ENCODE measurements at regions of chr19 and their contacts with region 1.

Region 1: GRCh38 chr19:7943444-7944176 is at the start of gene TIMM44:
- DNase-seq: peak; percentile 95 to 99 (median 98)
- ATAC-seq: peak; percentile 97
- H3K4me3 ChIP-seq: peak within 1 kb of the TSS; percentile 77 to 96
- H3K4me3 Mint-ChIP-seq: peak within 1 kb of the TSS; percentile 91
- H3K27ac ChIP-seq: peak within 1 kb of the TSS; percentile 96 to 97
- H3K27ac Mint-ChIP-seq: peak within 1 kb of the TSS; percentile 96
- H3K4me1 ChIP-seq: peaks cover 17% of the 10 kb centered on the region
- H3K4me1 Mint-ChIP-seq: peaks cover 35% of the 10 kb centered on the region
- H3K27me3 ChIP-seq: no peaks in the 10 kb centered on the region
- H3K27me3 Mint-ChIP-seq: no peaks in the 10 kb centered on the region
- CTCF ChIP-seq: no peak
- total RNA-seq, gene TIMM44: 97.7 to 101 TPM

Region 2: GRCh38 chr19:7636691-7637373 is 306.8 kb before region 1 on chr19 and contains the start of gene STXBP2:
- CTCF ChIA-PET with region 1: no interaction called
- POLR2A ChIA-PET with region 1: no interaction called
- intact Hi-C with region 1: loop called in 1 of 2 experiments (anchors 5 kb)
- DNase-seq: peak; percentile 89 to 99 (median 94)
- ATAC-seq: peak; percentile 99
- H3K4me3 ChIP-seq: peak within 1 kb of the TSS; percentile 36 to 93
- H3K4me3 Mint-ChIP-seq: peak within 1 kb of the TSS; percentile 85
- H3K27ac ChIP-seq: peak within 1 kb of the TSS; percentile 70 to 97
- H3K27ac Mint-ChIP-seq: peak within 1 kb of the TSS; percentile 91
- H3K4me1 ChIP-seq: peaks cover 24% of the 10 kb centered on the region
- H3K4me1 Mint-ChIP-seq: peaks cover 41% of the 10 kb centered on the region
- H3K27me3 ChIP-seq: no peaks in the 10 kb centered on the region
- H3K27me3 Mint-ChIP-seq: no peaks in the 10 kb centered on the region
- CTCF ChIP-seq: peak; percentile 34
- total RNA-seq, gene STXBP2: 260 to 270 TPM

Region 3: GRCh38 chr19:7799640-7800355 is 143.8 kb before region 1 on chr19:
- CTCF ChIA-PET with region 1: no interaction called
- POLR2A ChIA-PET with region 1: no interaction called
- intact Hi-C with region 1: no loop called
- DNase-seq: peak in 8 of 9 experiments; percentile 15 to 77 (median 66)
- ATAC-seq: no peak
- H3K4me3 ChIP-seq: no peak overlapping the region
- H3K4me3 Mint-ChIP-seq: no peak overlapping the region
- H3K27ac ChIP-seq: no peak overlapping the region
- H3K27ac Mint-ChIP-seq: no peak overlapping the region
- H3K4me1 ChIP-seq: no peaks in the 10 kb centered on the region
- H3K4me1 Mint-ChIP-seq: peaks cover 4% of the 10 kb centered on the region
- H3K27me3 ChIP-seq: peaks cover 0 to 4% of the 10 kb centered on the region in 2 experiments
- H3K27me3 Mint-ChIP-seq: peaks cover 11% of the 10 kb centered on the region
- CTCF ChIP-seq: peak; percentile 69

Region 4: DNA sequence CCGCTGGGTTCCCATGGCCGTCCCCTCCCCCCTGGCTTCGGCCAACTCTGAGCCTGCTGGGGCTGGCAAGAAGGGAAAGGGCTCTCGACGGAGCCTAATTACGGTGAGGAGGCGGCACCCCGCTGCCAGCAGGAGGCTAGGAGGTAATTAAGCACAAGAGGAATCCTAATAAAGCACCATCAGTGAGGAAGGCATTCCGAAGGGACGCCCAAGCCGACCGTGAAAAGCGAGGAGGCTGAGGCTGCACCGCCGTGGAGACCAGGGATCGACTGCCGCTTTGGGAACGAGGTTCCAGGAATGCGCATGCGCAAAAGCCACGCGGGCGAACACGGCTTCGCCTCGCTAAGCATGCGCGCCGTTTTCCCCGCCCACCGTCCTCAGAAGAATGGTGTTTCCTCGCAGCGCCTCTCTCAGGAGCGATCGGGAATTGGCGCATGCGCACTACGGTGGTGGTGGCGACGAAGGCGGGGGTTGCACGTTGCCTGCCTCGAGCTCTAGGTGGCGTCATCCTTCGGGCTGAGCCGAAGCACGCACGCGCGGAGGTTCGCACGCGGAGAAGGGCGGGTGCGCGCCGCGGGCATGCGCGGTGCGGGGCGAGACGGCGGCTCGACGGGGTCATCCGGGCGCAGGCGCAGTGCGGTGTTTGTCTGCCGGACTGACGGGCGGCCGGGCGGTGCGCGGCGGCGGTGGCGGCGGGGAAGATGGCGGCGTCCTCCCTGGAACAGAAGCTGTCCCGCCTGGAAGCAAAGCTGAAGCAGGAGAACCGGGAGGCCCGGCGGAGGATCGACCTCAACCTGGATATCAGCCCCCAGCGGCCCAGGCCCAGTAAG is 40.2 kb before region 1 on chr19 and contains the start of gene MAP2K7:
- CTCF ChIA-PET with region 1: interaction called, 8 read pairs
- POLR2A ChIA-PET with region 1: interaction called, 12 read pairs
- intact Hi-C with region 1: loop called (anchors 1 kb)
- DNase-seq: peak; percentile 99 to 100 (median 100)
- ATAC-seq: peak; percentile 81
- H3K4me3 ChIP-seq: peak within 1 kb of the TSS; percentile 59 to 87
- H3K4me3 Mint-ChIP-seq: peak within 1 kb of the TSS; percentile 91
- H3K27ac ChIP-seq: peak within 1 kb of the TSS; percentile 65 to 84
- H3K27ac Mint-ChIP-seq: peak within 1 kb of the TSS; percentile 96
- H3K4me1 ChIP-seq: peaks cover 30% of the 10 kb centered on the region
- H3K4me1 Mint-ChIP-seq: peaks cover 23% of the 10 kb centered on the region
- H3K27me3 ChIP-seq: no peaks in the 10 kb centered on the region
- H3K27me3 Mint-ChIP-seq: no peaks in the 10 kb centered on the region
- CTCF ChIP-seq: peak; percentile 59
- total RNA-seq, gene MAP2K7: 127 to 135 TPM

Region 5: DNA sequence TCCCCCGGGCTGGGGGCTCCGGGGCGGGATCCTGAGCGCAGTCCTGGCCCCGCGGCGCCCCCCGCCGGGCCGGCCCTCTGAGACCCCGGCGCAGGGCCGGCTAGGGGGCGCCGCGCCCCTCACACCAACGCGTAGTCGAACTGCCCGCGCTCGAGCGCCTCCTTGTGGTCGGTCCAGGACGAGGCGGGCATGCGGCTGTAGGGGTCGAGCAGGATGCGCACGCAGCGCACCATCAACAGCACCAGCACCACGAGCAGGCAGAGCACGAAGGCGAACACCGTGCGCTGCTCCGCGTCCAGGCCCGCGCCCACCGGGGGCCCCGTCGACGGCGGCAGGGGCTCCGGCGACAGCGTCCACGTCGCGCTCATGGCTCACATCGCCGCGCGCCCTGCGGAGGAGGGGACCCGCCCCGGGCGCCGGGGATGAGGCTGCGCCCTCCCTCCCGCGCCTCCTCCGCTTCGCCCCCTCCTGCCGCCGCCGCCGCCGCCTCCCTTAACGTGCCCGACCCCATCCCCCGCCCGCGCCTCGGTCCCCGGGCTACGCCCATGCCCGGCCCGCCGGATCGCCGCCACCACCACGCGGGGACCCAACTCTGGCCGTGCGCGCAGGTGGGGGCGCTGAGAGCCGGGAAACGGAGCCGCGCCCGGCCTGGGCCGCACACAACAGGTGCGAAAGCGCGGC is 18.3 kb before region 1 on chr19:
- CTCF ChIA-PET with region 1: interaction called, 34 read pairs
- POLR2A ChIA-PET with region 1: interaction called, 14 read pairs
- intact Hi-C with region 1: loop called (anchors 1 kb)
- DNase-seq: peak; percentile 60 to 90 (median 84)
- ATAC-seq: peak; percentile 21
- H3K4me3 ChIP-seq: no peak overlapping the region
- H3K4me3 Mint-ChIP-seq: peak overlapping the region; percentile 77
- H3K27ac ChIP-seq: no peak overlapping the region
- H3K27ac Mint-ChIP-seq: peak overlapping the region; percentile 45
- H3K4me1 ChIP-seq: peaks cover 24% of the 10 kb centered on the region
- H3K4me1 Mint-ChIP-seq: peaks cover 32% of the 10 kb centered on the region
- H3K27me3 ChIP-seq: no peaks in the 10 kb centered on the region
- H3K27me3 Mint-ChIP-seq: no peaks in the 10 kb centered on the region
- CTCF ChIP-seq: peak; percentile 73

Region 6: GRCh38 chr19:7970716-7971448 is 27.3 kb after region 1 on chr19:
- CTCF ChIA-PET with region 1: interaction called, 25 read pairs
- POLR2A ChIA-PET with region 1: interaction called, 3 read pairs
- intact Hi-C with region 1: no loop called
- DNase-seq: peak in 4 of 9 experiments; percentile 14 to 46 (median 25)
- ATAC-seq: no peak
- H3K4me3 ChIP-seq: no peak overlapping the region
- H3K4me3 Mint-ChIP-seq: no peak overlapping the region
- H3K27ac ChIP-seq: no peak overlapping the region
- H3K27ac Mint-ChIP-seq: no peak overlapping the region
- H3K4me1 ChIP-seq: no peaks in the 10 kb centered on the region
- H3K4me1 Mint-ChIP-seq: no peaks in the 10 kb centered on the region
- H3K27me3 ChIP-seq: no peaks in the 10 kb centered on the region
- H3K27me3 Mint-ChIP-seq: no peaks in the 10 kb centered on the region
- CTCF ChIP-seq: peak; percentile 58

Region 7: GRCh38 chr19:8208922-8209461 is 265.4 kb after region 1 on chr19 and contains the start of gene CERS4:
- CTCF ChIA-PET with region 1: no interaction called
- POLR2A ChIA-PET with region 1: no interaction called
- intact Hi-C with region 1: loop called in 1 of 2 experiments (anchors 1 kb)
- DNase-seq: peak; percentile 43 to 87 (median 75)
- ATAC-seq: peak; percentile 85
- H3K4me3 ChIP-seq: peak within 1 kb of the TSS; percentile 75 to 86
- H3K4me3 Mint-ChIP-seq: peak within 1 kb of the TSS; percentile 85
- H3K27ac ChIP-seq: peak within 1 kb of the TSS; percentile 51 to 72
- H3K27ac Mint-ChIP-seq: peak within 1 kb of the TSS; percentile 87
- H3K4me1 ChIP-seq: peaks cover 22% of the 10 kb centered on the region
- H3K4me1 Mint-ChIP-seq: peaks cover 26% of the 10 kb centered on the region
- H3K27me3 ChIP-seq: no peaks in the 10 kb centered on the region
- H3K27me3 Mint-ChIP-seq: no peaks in the 10 kb centered on the region
- CTCF ChIP-seq: no peak
- total RNA-seq, gene CERS4: 6.9 to 7.2 TPM

Region 8: GRCh38 chr19:8321060-8321985 is 377.7 kb after region 1 on chr19 and contains the starts of genes NDUFA7 and RPS28:
- CTCF ChIA-PET with region 1: no interaction called
- POLR2A ChIA-PET with region 1: no interaction called
- intact Hi-C with region 1: loop called in 1 of 2 experiments (anchors 1 kb)
- DNase-seq: peak; percentile 94 to 99 (median 97)
- ATAC-seq: peak; percentile 93
- H3K4me3 ChIP-seq: peak within 1 kb of the TSS; percentile 81 to 98
- H3K4me3 Mint-ChIP-seq: peak within 1 kb of the TSS; percentile 96
- H3K27ac ChIP-seq: peak within 1 kb of the TSS; percentile 90 to 96
- H3K27ac Mint-ChIP-seq: peak within 1 kb of the TSS; percentile 97
- H3K4me1 ChIP-seq: peaks cover 26% of the 10 kb centered on the region
- H3K4me1 Mint-ChIP-seq: peaks cover 37% of the 10 kb centered on the region
- H3K27me3 ChIP-seq: no peaks in the 10 kb centered on the region
- H3K27me3 Mint-ChIP-seq: no peaks in the 10 kb centered on the region
- CTCF ChIP-seq: no peak
- total RNA-seq, gene NDUFA7: 19.8 to 28.9 TPM
- total RNA-seq, gene RPS28: 3,224 to 3,257 TPM